Activated CD4-positive, alpha-beta T cell treated with anti-CD3 and anti-CD28 coated beads for 36 hours (primary cell): ENCODE measurements at regions of chr13 and their contacts with region 1.

Region 1: DNA sequence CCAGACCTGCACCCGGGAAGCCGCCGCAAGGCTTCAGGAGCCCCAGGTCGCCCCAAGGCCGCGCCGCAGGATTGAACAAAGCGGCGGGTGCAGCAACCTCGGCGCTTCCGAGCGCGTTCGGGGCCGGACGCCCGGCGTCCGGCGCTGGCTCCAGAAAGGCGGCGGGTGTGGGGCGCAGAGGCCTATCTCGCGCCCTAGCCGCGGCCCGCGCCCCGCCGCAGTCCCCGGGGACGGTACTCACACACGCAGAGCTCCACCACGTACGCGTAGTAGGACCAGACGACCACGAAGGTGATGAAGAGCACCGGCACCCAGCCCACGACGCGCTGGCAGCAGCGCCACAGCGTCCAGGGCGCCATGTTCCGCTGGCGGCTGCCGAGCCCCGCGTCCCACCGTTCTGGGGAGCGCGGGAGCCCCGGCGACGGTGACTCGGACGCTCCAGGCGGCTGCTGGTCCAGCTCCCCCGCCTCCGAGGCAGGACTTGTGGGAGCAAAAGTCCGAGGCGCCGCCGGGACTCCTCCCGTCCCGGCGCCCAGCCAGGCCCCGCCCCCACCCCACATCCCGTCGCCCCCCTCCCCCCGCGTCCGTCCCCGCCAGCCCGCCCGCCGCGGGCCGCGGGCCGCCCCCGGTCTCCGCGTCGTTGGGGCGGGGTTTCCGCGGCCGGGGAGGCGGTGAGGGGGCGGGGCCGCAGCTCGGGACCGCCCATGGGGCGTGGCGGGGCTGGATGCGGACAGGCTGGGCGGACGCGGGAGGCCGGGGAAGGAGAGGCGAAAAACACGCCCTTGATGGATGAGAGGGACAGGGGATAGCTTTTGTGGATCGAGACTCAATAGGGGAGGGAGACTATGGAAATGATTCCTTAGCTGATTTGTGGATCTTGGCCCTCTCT is at the start of gene ZDHHC20:
- DNase-seq: peak; percentile 93
- ATAC-seq: peak; percentile 83
- H3K4me3 Mint-ChIP-seq: peak within 1 kb of the TSS; percentile 93
- H3K27ac Mint-ChIP-seq: peak within 1 kb of the TSS; percentile 88
- H3K4me1 Mint-ChIP-seq: peaks cover 25% of the 10 kb centered on the region
- H3K27me3 Mint-ChIP-seq: no peaks in the 10 kb centered on the region
- total RNA-seq, gene ZDHHC20: 40.2 to 44.9 TPM

Region 2: DNA sequence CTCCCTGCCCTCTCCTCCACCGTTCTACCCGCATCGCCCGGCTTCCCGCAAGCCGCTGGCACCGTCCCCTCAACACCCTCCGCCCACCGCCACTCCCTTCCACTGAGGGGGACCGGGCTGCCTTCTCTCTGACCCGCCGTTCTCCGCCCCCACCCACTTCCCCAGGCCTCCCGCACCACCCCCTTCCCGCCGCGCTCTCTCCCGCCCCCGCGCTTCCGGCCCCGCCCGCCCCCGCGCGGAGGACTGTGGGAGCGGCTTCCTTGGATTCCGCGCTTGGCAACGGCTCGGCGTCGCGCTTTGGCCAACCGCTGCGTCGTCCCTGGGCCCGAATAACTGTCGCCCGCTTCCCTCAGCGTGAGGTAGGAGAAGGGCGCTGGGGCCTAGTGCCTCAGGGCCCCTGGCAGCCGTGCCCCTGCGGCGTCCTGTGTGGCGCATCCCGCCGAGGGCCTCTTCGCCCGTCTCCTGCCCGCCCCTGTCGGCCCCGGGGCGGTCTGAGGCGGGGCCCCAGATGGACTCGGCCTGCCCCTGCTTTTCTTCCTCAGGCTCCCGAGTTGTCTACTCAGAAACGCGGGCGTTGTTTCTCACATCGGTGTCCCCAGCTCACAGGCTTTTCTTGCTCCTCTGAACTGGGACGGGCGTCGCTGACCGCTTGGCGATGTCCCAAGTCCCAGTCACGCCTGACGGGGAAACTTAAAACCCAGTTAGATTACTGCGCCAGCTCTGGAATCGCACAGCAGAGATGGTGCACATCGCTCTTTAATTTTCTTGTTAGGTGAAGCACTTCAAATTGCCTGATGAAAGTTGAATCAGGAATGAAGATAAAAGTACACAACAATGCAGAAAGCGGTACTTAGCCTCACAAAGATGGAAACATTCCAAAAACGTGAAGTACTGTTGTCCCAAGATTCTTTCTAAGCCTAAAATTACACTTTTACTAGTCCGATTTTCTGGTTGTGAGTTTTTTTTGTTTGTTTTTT is 891.9 kb before region 1 on chr13 and contains the start of gene IFT88:
- CTCF ChIA-PET with region 1: no interaction called
- POLR2A ChIA-PET with region 1: no interaction called
- intact Hi-C with region 1: loop called in 1 of 2 experiments (anchors 5 kb)
- DNase-seq: peak; percentile 89
- ATAC-seq: peak; percentile 83
- H3K4me3 Mint-ChIP-seq: peak within 1 kb of the TSS; percentile 81
- H3K27ac Mint-ChIP-seq: peak within 1 kb of the TSS; percentile 80
- H3K4me1 Mint-ChIP-seq: peaks cover 19% of the 10 kb centered on the region
- H3K27me3 Mint-ChIP-seq: no peaks in the 10 kb centered on the region
- total RNA-seq, gene IFT88: 4.7 to 4.8 TPM

Region 3: GRCh38 chr13:21034603-21035191 is 424.4 kb before region 1 on chr13:
- CTCF ChIA-PET with region 1: no interaction called
- POLR2A ChIA-PET with region 1: no interaction called
- intact Hi-C with region 1: no loop called
- DNase-seq: no peak
- ATAC-seq: no peak
- H3K4me3 Mint-ChIP-seq: no peak overlapping the region
- H3K27ac Mint-ChIP-seq: no peak overlapping the region
- H3K4me1 Mint-ChIP-seq: peaks cover 9% of the 10 kb centered on the region
- H3K27me3 Mint-ChIP-seq: no peaks in the 10 kb centered on the region

Region 4: DNA sequence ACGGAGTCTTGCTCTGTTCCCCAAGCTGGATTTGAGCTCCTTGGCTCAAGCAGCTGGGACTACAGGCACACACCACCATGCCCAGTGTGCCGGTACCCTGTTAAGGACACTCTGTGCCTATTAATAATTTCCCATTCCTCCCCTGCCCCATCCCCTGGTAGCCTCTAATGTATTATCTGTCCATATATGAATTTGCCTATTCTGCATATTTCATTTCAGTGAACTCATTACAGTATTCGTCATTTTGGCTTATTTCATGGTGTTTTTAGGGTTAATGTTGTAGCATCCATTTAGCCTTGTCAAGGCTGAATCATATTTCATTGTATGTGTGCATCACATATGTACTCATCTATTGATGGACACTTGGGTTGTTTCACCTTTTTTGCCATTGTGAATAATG is 316.3 kb before region 1 on chr13:
- CTCF ChIA-PET with region 1: no interaction called
- POLR2A ChIA-PET with region 1: no interaction called
- intact Hi-C with region 1: no loop called
- DNase-seq: no peak
- ATAC-seq: no peak
- H3K4me3 Mint-ChIP-seq: peak overlapping the region; percentile 93
- H3K27ac Mint-ChIP-seq: peak overlapping the region; percentile 64
- H3K4me1 Mint-ChIP-seq: peaks cover 34% of the 10 kb centered on the region
- H3K27me3 Mint-ChIP-seq: no peaks in the 10 kb centered on the region

Region 5: DNA sequence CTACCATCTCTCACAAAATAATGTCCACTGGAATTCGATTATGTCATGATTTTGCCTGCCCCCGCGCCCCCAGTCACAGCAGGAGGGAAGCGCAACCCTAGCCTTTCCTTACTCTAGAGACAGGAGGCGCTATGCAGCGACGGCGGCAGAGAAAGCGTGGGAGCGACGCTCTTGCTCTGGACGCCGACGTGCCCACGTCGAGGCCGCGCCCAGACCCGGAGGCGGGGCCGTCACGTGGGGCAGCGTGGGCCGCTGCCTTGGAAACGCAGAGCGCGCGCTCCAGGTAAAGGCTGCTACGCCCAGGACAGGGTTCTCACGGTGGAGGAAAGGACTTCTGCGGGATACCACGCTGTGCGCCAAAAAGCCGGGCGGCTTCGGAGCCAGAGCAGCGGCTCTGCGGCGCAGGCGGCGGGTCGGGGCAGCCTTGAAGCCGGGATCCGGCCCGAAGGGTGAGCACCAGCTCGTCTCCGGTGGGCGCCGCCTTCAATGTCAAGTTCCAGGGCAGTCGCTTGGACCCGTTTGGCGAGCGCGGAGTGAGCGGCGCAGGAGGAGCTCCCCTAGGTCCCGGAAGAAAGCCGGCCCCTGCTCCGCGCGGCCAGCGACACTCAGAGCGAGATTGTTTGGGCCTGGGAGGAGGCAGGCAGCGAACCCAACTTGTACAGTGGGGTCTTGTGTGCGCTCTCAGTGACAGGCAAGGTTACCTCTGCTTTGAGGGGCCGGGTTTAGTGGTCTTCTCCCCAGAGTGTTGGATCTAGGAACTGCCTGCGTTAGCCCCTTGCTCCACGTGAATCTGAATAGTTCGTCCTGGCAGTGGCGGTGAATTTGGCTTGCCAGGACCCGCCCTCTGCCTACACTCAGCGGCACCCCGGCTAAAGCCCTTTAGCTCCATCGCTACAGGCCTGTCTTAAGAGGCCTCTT is 160.9 kb before region 1 on chr13:
- CTCF ChIA-PET with region 1: interaction called, 8 read pairs
- POLR2A ChIA-PET with region 1: no interaction called
- intact Hi-C with region 1: loop called (anchors 1 to 2 kb)
- DNase-seq: peak; percentile 93
- ATAC-seq: peak; percentile 93
- H3K4me3 Mint-ChIP-seq: peak overlapping the region; percentile 84
- H3K27ac Mint-ChIP-seq: peak overlapping the region; percentile 82
- H3K4me1 Mint-ChIP-seq: peaks cover 25% of the 10 kb centered on the region
- H3K27me3 Mint-ChIP-seq: no peaks in the 10 kb centered on the region

Region 6: GRCh38 chr13:21435710-21436151 is 23.3 kb before region 1 on chr13:
- CTCF ChIA-PET with region 1: no interaction called
- POLR2A ChIA-PET with region 1: no interaction called
- intact Hi-C with region 1: loop called (anchors 1 to 2 kb)
- DNase-seq: peak; percentile 58
- ATAC-seq: peak; percentile 91
- H3K4me3 Mint-ChIP-seq: no peak overlapping the region
- H3K27ac Mint-ChIP-seq: peak overlapping the region; percentile 18
- H3K4me1 Mint-ChIP-seq: peaks cover 33% of the 10 kb centered on the region
- H3K27me3 Mint-ChIP-seq: no peaks in the 10 kb centered on the region

Region 7: DNA sequence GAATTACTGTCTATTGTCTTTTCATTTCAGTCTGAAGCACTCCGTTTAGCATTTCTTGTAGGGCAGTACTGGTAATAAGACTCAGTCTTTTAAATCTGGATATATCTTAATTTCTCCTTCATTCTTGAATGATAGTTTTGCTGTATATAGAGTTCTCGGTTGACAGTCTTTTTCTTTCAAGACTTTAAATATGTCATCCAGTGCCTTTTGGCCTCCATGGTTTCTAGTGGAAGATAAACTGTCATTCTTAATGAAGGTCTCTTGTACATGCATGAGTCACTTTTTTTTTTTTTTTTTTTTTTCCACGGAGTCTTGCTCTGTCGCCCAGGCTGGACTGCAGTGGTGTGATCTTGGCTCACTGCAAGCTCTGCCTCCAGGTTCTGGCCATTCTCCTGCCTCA is 27.3 kb after region 1 on chr13:
- CTCF ChIA-PET with region 1: no interaction called
- POLR2A ChIA-PET with region 1: no interaction called
- intact Hi-C with region 1: no loop called
- DNase-seq: no peak
- ATAC-seq: no peak
- H3K4me3 Mint-ChIP-seq: no peak overlapping the region
- H3K27ac Mint-ChIP-seq: no peak overlapping the region
- H3K4me1 Mint-ChIP-seq: no peaks in the 10 kb centered on the region
- H3K27me3 Mint-ChIP-seq: no peaks in the 10 kb centered on the region

Region 8: DNA sequence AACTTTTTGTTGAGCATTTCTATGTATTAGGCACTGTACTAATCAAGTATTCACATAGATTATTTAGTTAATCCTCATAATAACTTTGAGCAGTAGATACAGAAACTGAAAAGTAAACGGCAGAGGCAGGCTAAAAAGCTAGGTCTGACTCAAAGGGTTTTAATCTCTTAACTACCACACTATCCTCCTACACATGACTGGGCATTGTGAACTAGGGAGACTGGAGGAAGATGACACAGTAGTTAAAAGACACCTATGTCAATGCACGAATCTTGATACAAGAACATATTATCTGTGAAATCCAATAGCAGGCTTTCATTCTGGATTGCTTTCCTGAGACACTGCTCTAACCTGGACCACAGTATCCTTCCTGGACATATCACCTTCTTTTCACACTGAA is 108.7 kb after region 1 on chr13:
- CTCF ChIA-PET with region 1: no interaction called
- POLR2A ChIA-PET with region 1: no interaction called
- intact Hi-C with region 1: no loop called
- DNase-seq: no peak
- ATAC-seq: peak; percentile 90
- H3K4me3 Mint-ChIP-seq: no peak overlapping the region
- H3K27ac Mint-ChIP-seq: no peak overlapping the region
- H3K4me1 Mint-ChIP-seq: peaks cover 22% of the 10 kb centered on the region
- H3K27me3 Mint-ChIP-seq: no peaks in the 10 kb centered on the region

Region 9: DNA sequence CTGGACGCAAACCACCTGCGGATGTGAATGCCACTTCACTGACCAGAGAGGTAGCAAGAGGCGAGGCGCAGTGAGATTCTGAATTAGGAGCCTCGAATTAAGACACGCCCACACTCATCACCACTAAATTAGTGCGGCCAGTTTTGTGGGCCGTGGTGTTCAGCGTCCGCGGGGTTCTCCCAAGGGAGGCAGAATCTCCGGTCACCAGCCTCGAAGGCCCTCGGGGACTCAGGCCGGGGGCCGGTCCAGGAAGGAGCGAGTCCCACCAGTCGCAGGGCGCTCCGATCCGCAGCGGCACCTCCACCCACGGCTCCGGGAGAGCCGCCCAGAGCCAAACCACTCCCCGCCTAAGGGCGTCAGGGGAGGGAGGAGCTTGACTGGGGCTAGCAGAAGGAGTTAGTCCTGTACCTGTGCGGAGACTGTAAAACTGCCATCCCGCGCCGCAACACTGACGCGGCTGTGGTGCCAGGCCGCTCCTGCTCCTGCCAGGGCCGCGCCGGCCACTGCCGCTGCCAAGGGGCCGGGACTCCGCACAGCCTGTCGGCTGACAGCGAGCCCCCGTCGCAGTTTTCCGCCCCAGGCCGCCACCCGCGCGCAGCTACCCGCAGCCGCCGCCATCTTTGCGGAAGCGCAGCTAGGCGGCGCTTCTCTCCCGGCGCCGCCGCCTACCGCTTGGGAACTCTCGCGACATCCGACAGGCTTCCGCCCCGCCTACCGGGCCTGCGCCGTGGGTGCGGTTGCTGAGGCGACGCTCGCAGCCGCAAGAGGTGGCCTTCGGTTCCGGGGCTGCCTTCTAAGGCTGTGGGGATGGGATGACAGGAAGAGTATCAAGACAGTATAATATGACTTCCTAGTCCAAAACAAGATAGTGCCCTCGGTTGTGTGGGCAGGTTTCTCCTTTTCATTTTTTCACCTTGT is 144.7 kb after region 1 on chr13 and contains the start of gene MICU2:
- CTCF ChIA-PET with region 1: no interaction called
- POLR2A ChIA-PET with region 1: interaction called, 4 read pairs
- intact Hi-C with region 1: loop called in 1 of 2 experiments (anchors 1 kb)
- DNase-seq: peak; percentile 97
- ATAC-seq: peak; percentile 96
- H3K4me3 Mint-ChIP-seq: peak within 1 kb of the TSS; percentile 85
- H3K27ac Mint-ChIP-seq: peak within 1 kb of the TSS; percentile 94
- H3K4me1 Mint-ChIP-seq: peaks cover 35% of the 10 kb centered on the region
- H3K27me3 Mint-ChIP-seq: peaks cover 1% of the 10 kb centered on the region
- total RNA-seq, gene MICU2: 28.4 to 28.7 TPM